ENCODE measurements at regions of chr19 and their contacts with region 1.

Region 1: DNA sequence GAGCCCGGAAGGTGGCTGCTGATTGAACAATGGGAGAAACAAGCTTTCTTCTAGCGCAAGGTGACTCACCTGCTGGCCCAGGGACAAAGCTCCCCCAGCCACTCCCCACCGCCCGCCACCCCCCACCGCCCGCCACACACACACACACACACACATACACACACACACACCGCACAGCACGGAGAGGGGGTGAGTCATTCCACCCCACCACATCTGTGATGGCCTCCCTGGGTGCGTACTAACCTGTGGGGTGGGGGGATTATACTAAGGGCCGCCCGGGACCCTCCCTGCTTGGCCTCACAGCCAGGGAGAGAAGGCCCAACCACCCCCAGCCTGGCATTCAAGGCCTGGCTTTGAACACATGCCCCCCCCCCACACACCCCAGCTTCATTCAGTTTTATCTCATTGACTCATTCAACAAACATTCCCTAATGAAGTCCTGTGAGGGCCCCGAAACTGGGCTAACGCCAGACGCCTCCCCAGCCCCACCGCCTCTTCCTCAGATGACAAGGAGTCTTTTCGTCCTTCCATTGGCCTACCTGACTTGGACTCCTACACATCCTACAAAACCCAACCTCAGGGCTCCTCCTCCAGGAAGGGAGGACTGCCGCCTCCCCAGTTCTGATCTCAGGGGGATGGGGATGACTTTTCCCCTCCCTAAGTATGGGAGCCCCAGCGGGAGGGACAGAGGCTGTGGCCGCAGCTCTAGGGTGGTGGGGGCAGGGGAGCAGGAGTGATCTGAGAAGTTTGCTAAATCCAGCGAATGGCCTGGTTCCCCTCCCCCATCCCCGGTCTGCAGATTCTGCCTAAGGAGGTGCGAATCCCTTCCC is 5.8 kb upstream of the ONECUT3 start:
- DNase-seq: peak; percentile 100
- ATAC-seq: peak; percentile 77
- H3K4me3 ChIP-seq: peak overlapping the region; percentile 67 to 78
- H3K27ac ChIP-seq: peak overlapping the region; percentile 100
- H3K4me1 ChIP-seq: peaks cover 37 to 78% of the 10 kb centered on the region in 2 experiments
- H3K27me3 ChIP-seq: no peaks in the 10 kb centered on the region
- CTCF ChIP-seq: no peak
- POLR2A ChIP-seq: no peak
- RAD21 ChIP-seq: no peak

Region 2: DNA sequence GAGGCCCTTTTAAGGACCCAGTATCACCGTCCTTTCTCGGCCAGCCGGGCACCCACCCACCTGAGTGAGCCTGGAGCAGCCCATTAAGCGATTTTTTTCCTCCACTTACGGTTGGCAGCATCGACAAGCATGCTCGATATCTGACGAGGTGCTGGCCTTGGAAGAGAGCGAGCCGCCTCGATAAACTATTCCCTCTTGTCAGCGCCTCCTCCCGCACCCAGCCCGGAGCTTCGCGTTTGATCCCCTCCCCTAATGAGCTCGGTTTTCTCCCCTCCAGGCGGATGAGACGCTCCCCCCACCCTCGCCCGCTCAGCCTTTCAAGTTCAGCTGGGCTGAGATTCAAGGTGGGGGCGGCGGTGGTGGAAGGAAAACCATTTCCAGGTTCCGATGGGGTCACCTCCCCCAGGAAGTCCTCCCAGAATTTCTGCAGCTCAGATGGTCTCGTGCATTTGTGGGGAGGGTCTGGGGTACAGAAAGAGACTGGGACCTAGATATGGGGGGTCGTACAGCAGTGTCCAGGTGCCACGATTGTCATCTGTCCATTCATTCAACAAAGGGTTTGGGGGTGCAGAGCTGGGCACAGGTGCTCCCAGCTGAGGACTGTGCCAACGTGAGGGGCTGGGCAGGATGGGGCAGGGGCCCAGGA is 13.1 kb before region 1 on chr19:
- CTCF ChIA-PET with region 1: no interaction called
- POLR2A ChIA-PET with region 1: interaction called, 12 read pairs
- RAD21 ChIA-PET with region 1: interaction called in 1 of 2 experiments, 4 read pairs
- intact Hi-C with region 1: no loop called
- DNase-seq: no peak
- ATAC-seq: no peak
- H3K4me3 ChIP-seq: no peak overlapping the region
- H3K27ac ChIP-seq: no peak overlapping the region
- H3K4me1 ChIP-seq: no peaks in the 10 kb centered on the region
- H3K27me3 ChIP-seq: no peaks in the 10 kb centered on the region
- CTCF ChIP-seq: no peak
- POLR2A ChIP-seq: no peak
- RAD21 ChIP-seq: no peak

Region 3: DNA sequence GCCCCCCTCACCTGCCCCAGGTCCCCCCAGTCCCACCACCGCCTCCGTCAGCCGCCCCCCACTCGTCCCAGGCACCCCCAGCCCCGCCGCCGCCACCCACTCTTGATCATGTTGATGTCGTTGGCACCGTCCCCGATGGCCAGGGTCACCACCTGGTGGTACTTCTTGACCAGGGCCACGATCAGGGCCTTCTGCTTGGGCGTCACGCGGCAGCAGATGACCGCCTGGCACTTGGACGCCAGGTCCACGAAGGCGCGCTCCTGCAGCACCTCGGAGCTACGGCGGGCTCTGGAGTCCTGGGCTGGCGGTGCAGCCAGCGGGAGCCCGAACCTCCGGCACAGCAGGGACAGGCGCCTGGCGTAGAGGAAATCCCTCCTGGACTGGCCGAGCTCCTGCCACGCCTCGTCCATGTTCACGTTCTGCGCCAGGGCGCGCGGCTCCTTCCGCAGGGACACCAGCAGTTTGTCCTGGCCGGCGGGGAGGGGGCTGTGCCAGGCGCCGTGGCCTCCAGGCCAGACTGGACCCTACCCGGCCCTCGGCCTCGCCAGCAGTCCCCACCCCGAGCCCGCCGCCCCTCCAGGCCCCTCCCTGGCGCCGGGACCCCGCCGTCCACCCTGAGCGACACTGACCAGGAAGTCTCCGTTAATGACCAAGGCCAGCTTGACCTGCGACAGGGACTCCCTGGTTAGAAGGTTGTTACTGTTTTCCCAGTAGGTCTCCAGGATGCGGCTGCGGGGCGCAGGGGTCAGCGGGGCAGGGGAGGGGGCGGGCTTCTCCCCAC is 42.0 kb after region 1 on chr19:
- CTCF ChIA-PET with region 1: no interaction called
- POLR2A ChIA-PET with region 1: no interaction called
- RAD21 ChIA-PET with region 1: no interaction called
- intact Hi-C with region 1: no loop called
- DNase-seq: no peak
- ATAC-seq: no peak
- H3K4me3 ChIP-seq: no peak overlapping the region
- H3K27ac ChIP-seq: no peak overlapping the region
- H3K4me1 ChIP-seq: peaks cover 0 to 9% of the 10 kb centered on the region in 2 experiments; a peak in 2 of 4 replicates
- H3K27me3 ChIP-seq: no peaks in the 10 kb centered on the region
- CTCF ChIP-seq: no peak
- POLR2A ChIP-seq: no peak
- RAD21 ChIP-seq: no peak

Measured in HCT116 (cell line).